Breast epithelium (tissue), 4 donors: ENCODE measurements at regions of chr14 and their contacts with region 1.

Region 1: GRCh38 chr14:61811882-61812760 is 49.9 kb downstream of the SNAPC1 start:
- DNase-seq: no peak
- H3K4me3 ChIP-seq: peak within 1 kb of the TSS; percentile 32 to 66 (median 42)
- H3K27ac ChIP-seq: no peak within 1 kb of the TSS
- H3K4me1 ChIP-seq: peaks cover 0 to 3% of the 10 kb centered on the region in 2 donors
- H3K27me3 ChIP-seq: peaks cover 0 to 15% of the 10 kb centered on the region in 2 donors
- CTCF ChIP-seq: no peak
- POLR2A ChIP-seq: no peak

Region 2: DNA sequence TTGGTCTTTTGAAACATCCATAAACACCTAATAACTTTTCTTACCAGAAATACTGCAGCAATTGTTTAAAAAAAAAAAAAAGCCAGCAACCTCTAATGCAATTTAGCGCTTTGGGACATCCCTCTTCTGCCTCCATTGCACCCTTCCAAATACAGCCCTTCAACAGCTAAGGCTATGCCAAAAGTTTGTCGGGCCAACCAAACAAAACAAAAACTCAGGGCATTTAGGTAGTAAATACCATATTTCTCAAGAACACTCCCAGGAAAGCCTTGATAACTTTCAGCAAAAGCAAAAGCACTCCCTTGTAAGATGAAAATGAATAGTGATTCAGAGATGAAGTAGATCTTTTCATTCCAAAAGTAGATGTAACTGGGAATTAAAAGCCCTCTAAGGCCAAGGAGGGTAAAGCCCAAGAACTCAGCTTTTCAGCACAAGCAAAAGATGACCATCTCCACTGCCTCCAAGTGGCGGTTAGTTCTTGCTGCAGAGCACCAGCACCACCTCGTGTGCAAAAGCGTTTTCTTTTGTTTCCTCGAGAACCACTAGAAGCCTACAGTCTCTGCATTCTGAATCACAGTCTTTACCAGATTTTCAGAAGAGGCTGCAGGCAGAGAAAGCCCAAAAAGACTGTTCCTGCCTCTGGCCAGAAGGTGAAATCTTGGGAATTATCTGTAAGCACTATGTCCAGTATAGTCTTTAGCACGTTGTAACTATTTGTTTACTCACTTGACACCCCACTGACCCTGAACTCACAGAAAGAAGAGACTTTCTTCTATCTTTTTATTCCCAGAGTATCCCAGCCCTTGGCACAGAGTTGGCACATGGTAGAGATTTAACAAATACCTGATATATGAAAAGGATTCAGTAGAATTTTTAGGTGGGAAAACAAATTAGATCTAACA is 1250.0 kb before region 1 on chr14:
- intact Hi-C with region 1: no loop called
- DNase-seq: no peak
- H3K4me3 ChIP-seq: no peak overlapping the region
- H3K27ac ChIP-seq: no peak overlapping the region
- H3K4me1 ChIP-seq: no peaks in the 10 kb centered on the region
- H3K27me3 ChIP-seq: no peaks in the 10 kb centered on the region
- CTCF ChIP-seq: peak in 2 of 3 donors; percentile 31 to 62
- POLR2A ChIP-seq: no peak

Region 3: GRCh38 chr14:61797309-61797708 is 14.8 kb before region 1 on chr14:
- intact Hi-C with region 1: loop called (anchors 1 kb)
- DNase-seq: no peak
- H3K4me3 ChIP-seq: no peak overlapping the region
- H3K27ac ChIP-seq: no peak overlapping the region
- H3K4me1 ChIP-seq: no peaks in the 10 kb centered on the region
- H3K27me3 ChIP-seq: no peaks in the 10 kb centered on the region
- CTCF ChIP-seq: no peak
- POLR2A ChIP-seq: no peak

Region 4: DNA sequence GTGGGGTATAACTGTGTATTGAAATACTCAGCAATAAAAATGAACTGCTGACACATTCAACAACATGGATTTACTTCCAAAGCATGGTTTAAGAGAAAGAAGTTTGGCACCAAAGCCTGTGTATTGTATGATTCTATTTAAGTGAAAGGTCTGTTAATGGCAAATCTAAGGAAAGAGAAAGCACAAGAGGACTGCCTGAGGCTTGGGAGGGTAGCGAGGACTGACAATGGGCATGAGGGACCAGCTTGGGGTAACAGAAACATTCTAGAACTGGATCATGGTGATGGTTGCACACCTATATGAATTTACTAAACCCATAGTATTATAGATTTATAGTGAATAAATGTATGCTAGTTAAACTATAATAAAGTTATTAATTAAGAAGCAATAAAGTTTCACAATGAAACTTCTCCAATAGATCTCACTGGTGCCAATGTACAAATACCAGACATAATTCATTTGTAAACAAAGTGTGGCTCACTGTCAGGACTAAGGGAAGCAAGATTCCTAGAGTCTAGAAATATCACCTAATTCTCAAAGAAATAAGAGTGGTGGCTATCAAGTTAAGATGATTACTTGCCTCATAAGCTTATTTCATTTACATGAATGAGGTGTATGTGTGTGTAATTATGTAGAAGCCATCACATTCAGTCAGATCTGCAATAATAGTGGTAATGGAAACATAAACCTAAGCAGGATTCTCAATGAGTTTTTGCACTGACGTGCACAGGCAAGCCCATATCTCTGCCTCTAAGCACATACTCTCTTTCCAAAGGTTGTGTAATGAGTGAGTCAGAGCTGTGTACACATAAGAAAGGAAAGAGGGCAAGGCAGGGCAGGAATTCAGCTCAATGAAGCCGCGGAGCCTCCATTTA is 879.7 kb after region 1 on chr14:
- intact Hi-C with region 1: no loop called
- DNase-seq: peak in 1 of 2 donors; percentile 45
- H3K4me3 ChIP-seq: no peak overlapping the region
- H3K27ac ChIP-seq: peak overlapping the region; percentile 54 to 75
- H3K4me1 ChIP-seq: no peaks in the 10 kb centered on the region
- H3K27me3 ChIP-seq: no peaks in the 10 kb centered on the region
- CTCF ChIP-seq: no peak
- POLR2A ChIP-seq: no peak

Region 5: GRCh38 chr14:63055631-63056030 is 1243.5 kb after region 1 on chr14:
- intact Hi-C with region 1: no loop called
- DNase-seq: no peak
- H3K4me3 ChIP-seq: no peak overlapping the region
- H3K27ac ChIP-seq: no peak overlapping the region
- H3K4me1 ChIP-seq: no peaks in the 10 kb centered on the region
- H3K27me3 ChIP-seq: peaks cover 0 to 7% of the 10 kb centered on the region in 2 donors
- CTCF ChIP-seq: no peak
- POLR2A ChIP-seq: no peak